GM12878 (cell line): ENCODE measurements at regions of chr17 and their contacts with region 1.

Region 1: GRCh38 chr17:75784473-75785015 is at the start of gene UNK:
- DNase-seq: peak; percentile 96
- ATAC-seq: peak; percentile 80
- H3K4me3 ChIP-seq: peak within 1 kb of the TSS; percentile 79
- H3K27ac ChIP-seq: peak within 1 kb of the TSS; percentile 97
- H3K4me1 ChIP-seq: peaks cover 22% of the 10 kb centered on the region
- H3K27me3 ChIP-seq: no peaks in the 10 kb centered on the region
- CTCF ChIP-seq: no peak
- EP300 ChIP-seq: no peak
- POLR2A ChIP-seq: no peak
- RAD21 ChIP-seq: no peak
- polyA plus RNA-seq, gene UNK: 8.9 to 11.9 TPM

Region 2: DNA sequence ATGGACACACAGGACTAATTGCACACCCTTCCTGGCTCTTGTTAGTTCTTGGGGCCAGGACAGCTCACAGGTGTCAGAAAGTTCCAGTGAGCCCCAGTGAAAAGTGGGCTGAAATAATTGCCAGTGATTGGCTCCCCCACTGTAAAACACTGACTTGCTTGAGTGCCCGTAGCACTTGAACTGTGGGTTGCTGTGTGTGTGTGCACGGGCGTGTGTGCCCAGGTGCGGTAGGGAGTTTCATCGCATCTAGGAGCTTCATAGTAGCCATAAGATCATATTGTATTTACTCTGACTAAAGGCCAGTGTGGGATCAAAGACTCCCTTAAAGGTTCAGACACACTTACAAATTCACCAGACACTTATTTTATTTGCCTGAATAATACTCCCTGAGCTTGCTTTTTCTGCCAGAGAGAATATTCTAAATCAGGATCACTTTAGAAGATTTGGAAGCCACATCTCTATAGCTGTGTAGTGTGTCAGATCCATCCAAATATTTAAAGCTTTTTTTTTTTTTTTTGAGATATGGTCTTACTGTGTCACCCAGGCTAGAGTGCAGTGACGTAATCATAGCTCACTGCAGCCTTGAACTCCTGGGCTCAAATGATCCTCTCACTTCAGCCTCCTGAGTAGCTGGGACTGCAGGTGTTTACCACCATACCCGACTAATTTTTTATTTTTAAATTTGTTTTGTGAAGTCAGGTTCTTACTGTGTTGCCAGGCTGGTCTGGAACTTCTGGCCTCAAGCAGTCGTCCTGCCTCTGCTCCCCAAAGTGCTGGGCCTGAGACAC is 11.5 kb after region 1 on chr17:
- CTCF ChIA-PET with region 1: interaction called, 12 read pairs
- POLR2A ChIA-PET with region 1: interaction called, 17 read pairs
- RAD21 ChIA-PET with region 1: interaction called, 6 read pairs
- SMC1A ChIA-PET with region 1: interaction called, 9 read pairs
- in situ Hi-C with region 1: no loop called
- intact Hi-C with region 1: no loop called
- DNase-seq: no peak
- ATAC-seq: no peak
- H3K4me3 ChIP-seq: no peak overlapping the region
- H3K27ac ChIP-seq: no peak overlapping the region
- H3K4me1 ChIP-seq: no peaks in the 10 kb centered on the region
- H3K27me3 ChIP-seq: no peaks in the 10 kb centered on the region
- CTCF ChIP-seq: no peak
- EP300 ChIP-seq: no peak
- POLR2A ChIP-seq: no peak
- RAD21 ChIP-seq: no peak

Region 3: DNA sequence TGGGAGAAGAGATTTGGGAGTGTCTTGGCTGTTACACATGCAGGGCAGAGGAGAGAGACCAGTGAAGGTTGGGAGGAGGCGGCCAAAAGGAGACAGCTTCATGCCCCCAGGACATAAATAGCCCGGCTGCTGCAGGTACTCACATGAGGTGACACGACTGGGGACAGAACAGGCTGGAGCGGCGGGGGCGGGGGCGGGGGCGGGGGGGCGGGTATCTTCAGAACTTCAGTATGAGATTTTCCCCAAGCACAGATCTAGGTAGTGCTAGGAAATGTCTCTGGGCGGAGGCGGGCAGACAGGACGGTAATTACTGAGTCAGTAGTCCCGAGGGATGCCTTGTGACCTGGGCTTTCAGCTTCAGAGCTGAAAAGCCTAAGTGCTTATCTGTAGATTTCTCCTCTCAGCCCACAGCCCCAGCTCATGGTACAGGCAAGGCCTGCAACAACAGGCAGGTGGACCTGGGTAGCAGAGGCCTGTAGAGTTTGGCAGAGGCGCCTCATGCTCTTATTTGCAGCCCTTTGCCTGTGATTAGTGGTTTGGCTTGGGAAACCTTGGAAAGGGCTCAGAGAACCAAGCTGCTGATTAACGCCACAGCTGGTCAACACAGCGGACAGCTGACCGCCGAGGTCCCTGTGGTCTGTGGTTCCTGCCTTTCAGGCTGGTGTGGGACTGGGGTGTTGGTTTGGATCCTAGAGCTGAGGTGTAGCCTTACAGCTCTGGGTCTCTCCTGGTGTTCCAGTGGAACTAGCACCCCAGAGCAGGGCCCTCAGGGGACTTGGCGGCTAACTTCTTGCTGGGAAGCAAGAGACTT is 24.6 kb after region 1 on chr17:
- CTCF ChIA-PET with region 1: interaction called, 20 read pairs
- POLR2A ChIA-PET with region 1: interaction called, 33 read pairs
- RAD21 ChIA-PET with region 1: interaction called, 24 read pairs
- SMC1A ChIA-PET with region 1: interaction called, 15 read pairs
- in situ Hi-C with region 1: no loop called
- intact Hi-C with region 1: no loop called
- DNase-seq: peak; percentile 57
- ATAC-seq: peak; percentile 90
- H3K4me3 ChIP-seq: no peak overlapping the region
- H3K27ac ChIP-seq: 0 out of 2 replicates have a peak overlapping the region, but pooled peaks have one; percentile 6
- H3K4me1 ChIP-seq: peaks cover 9% of the 10 kb centered on the region
- H3K27me3 ChIP-seq: no peaks in the 10 kb centered on the region
- CTCF ChIP-seq: no peak
- EP300 ChIP-seq: no peak
- POLR2A ChIP-seq: no peak
- RAD21 ChIP-seq: no peak

Region 4: DNA sequence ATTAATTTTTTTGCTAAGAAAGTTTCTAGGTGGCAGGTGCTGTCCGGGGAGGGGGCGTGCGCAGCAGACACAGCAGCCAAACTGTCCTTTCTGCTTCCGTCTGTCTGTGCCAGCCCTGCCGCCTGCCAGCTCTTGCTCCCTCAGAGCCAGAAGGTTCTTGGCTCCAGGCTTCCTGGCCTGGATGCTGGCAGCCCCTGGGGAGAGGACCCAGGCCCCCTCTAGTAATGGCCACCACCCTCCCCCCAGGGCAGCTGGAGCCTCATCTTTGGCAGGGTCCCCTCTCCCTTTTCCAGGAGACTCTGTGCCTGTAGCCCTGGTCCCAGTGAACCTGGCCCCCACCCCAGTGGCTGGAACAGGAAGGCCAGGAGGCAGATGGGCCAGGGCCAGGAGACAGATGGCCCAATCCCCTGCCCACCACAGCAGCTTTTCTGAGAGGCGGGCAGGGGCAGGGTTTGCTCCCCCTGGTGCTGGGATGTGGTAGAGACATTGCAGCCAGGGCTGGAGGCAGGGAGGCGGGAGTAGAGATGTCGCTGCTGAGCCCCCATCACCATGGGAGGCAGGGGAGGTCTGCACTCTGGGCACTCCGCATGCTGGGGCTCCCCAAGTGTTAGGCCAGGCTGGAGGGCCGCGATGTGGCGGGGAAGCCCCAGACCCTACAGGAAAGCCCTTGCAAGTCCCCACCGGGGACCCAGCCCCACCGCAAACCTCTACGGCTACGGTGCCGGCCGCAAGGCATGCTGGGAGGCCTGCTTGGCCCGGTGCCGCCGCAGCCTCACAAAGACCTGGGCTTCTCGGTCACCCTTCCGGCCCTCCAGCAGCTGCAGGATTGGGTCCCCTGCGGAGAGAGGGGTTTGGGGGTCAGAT is 42.9 kb after region 1 on chr17:
- CTCF ChIA-PET with region 1: interaction called, 21 read pairs
- POLR2A ChIA-PET with region 1: interaction called, 6 read pairs
- RAD21 ChIA-PET with region 1: interaction called, 8 read pairs
- SMC1A ChIA-PET with region 1: interaction called, 4 read pairs
- in situ Hi-C with region 1: no loop called
- intact Hi-C with region 1: no loop called
- DNase-seq: no peak
- ATAC-seq: peak; percentile 79
- H3K4me3 ChIP-seq: no peak overlapping the region
- H3K27ac ChIP-seq: no peak overlapping the region
- H3K4me1 ChIP-seq: no peaks in the 10 kb centered on the region
- H3K27me3 ChIP-seq: no peaks in the 10 kb centered on the region
- CTCF ChIP-seq: peak; percentile 53 to 73 (median 59)
- EP300 ChIP-seq: no peak
- POLR2A ChIP-seq: peak; percentile 68
- RAD21 ChIP-seq: peak; percentile 36; the same call in 1 of the 2 replicates